Activated CD4-positive, alpha-beta memory T cell treated with anti-CD3 and anti-CD28 coated beads, Interleukin-2, amount 10 ng/mL, durations not matched to agents 7 days and 5 days (primary cell): ENCODE measurements at regions of chr1 and their contacts with region 1.

Region 1: DNA sequence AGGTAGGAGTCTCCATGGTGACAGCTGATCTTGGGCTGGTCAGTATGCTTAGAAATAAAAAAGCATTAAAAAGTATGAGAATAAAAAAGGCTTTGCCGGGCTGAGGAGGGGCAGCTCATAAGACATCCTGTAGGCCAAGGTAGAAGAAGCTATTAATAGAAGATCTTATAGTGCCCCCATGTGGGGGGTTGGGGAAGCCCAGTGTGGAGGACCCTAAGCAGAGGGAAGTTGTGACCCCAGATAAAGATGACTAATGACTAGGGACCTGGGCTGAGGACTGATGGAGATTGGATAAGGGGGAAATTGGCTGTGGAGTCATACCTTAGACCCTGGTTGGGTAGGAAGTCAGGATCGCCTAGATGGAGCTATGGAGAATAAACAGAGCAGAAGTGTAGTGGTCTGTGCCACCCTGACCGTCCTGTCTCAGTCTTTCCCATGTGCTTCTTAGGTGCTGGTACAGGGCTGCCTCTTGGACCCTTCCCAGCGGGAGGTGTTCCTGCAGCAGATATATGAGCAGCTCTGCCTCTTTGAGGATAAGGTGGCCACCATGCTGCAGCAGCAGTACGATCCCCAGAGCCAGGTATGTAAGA is 25.0 kb downstream of the SZT2 start:
- DNase-seq: peak; percentile 60
- H3K4me3 Mint-ChIP-seq: no peak overlapping the region
- H3K27ac Mint-ChIP-seq: no peak overlapping the region
- H3K4me1 Mint-ChIP-seq: no peaks in the 10 kb centered on the region
- H3K27me3 Mint-ChIP-seq: no peaks in the 10 kb centered on the region

Region 2: DNA sequence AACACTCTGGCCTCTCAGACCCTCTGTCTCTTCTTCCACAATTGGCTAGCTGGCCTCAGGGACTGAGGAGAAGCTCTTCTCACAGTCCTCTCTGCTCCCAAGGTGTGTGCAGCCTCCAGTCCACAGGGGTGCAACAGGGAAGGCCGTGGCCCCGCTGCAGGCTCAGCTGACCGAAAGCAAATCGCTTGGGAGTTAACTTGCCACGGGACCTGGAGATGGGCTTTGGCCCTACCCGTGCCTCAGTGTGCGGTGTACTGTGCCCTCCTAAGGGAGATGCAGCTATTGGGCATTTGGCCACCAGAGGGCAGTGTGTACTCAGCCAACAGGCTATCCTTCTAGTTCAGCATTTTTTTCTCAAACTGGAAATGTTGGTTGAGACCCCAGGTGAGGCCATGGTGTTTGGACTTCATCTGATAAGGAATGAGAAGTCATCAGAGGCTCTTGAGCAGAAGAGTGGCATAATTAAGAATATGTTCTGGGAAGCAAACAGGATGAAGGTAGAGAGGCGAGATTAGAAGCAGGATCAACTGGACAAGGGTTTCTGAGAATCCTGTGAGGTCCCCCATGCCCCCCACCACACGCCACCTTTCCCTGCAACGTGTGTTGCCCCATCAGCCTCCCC is 187.5 kb before region 1 on chr1:
- CTCF ChIA-PET with region 1: interaction called, 87 read pairs
- POLR2A ChIA-PET with region 1: interaction called, 5 read pairs
- DNase-seq: peak; percentile 83
- H3K4me3 Mint-ChIP-seq: no peak overlapping the region
- H3K27ac Mint-ChIP-seq: no peak overlapping the region
- H3K4me1 Mint-ChIP-seq: no peaks in the 10 kb centered on the region
- H3K27me3 Mint-ChIP-seq: peaks cover 2% of the 10 kb centered on the region

Region 3: GRCh38 chr1:43444836-43445235 is 30.1 kb after region 1 on chr1:
- CTCF ChIA-PET with region 1: no interaction called
- POLR2A ChIA-PET with region 1: no interaction called
- DNase-seq: no peak
- H3K4me3 Mint-ChIP-seq: no peak overlapping the region
- H3K27ac Mint-ChIP-seq: no peak overlapping the region
- H3K4me1 Mint-ChIP-seq: no peaks in the 10 kb centered on the region
- H3K27me3 Mint-ChIP-seq: no peaks in the 10 kb centered on the region